HEK293 (cell line): ENCODE measurements at regions of chrX and their contacts with region 1.

Region 1: DNA sequence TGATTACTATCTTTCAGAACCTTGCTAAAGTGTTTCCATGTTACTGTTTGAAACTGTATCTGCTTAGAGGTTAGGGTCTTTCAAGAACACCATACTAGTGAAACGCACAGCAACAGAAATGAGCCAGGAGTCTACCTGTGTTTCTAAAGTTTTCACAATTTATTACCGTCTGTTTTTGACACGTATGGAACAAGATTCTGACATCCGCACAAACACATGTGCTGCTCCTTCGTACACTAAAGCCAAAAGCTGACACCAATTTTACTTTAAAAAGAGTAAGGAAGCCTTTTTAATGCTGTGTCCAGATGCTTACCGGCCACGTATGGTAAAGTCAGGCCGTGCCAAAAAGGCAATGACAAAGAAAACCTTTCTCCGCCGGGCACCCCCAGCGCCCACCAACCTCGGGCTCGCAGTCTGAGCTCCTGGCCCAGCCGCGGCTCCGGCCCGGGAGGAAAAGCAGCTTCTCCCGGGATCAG is 532 bp downstream of the RPS4X start:
- H3K4me3 ChIP-seq: peak overlapping the region; percentile 82
- H3K27ac ChIP-seq: peak overlapping the region; percentile 99
- H3K4me1 ChIP-seq: peaks cover 10% of the 10 kb centered on the region
- CTCF ChIP-seq: no peak

Region 2: GRCh38 chrX:72238721-72239475 is 37.6 kb before region 1 on chrX and contains the start of gene ERCC6L:
- CTCF ChIA-PET with region 1: interaction called, 44 read pairs
- POLR2A ChIA-PET with region 1: interaction called, 43 read pairs
- H3K4me3 ChIP-seq: peak within 1 kb of the TSS; percentile 56
- H3K27ac ChIP-seq: peak within 1 kb of the TSS; percentile 74
- H3K4me1 ChIP-seq: no peaks in the 10 kb centered on the region
- CTCF ChIP-seq: 0 out of 2 replicates have a peak, but pooled peaks have one; percentile 29

Region 3: DNA sequence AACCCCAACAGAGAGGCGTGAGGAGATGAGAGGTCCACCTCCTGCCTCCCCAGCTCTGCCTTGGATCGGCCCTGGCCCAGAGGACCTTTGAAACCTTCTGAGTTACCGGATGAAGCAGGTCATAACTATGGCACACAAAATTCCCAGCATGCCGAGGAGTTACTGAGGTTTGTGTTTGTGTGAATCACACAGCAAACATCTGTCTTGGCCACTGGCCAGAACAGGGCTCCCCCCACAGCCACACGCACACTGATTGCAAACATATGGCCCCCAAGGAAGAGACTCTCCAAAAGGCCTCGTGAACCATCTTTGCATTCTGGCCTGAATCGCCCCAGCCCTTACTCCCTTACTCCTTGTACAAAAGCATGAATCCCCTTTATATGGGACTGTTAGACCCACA is 18.3 kb before region 1 on chrX:
- CTCF ChIA-PET with region 1: interaction called, 7 read pairs
- POLR2A ChIA-PET with region 1: interaction called, 60 read pairs
- H3K4me3 ChIP-seq: no peak overlapping the region
- H3K27ac ChIP-seq: no peak overlapping the region
- H3K4me1 ChIP-seq: peaks cover 12% of the 10 kb centered on the region
- CTCF ChIP-seq: no peak

Region 4: DNA sequence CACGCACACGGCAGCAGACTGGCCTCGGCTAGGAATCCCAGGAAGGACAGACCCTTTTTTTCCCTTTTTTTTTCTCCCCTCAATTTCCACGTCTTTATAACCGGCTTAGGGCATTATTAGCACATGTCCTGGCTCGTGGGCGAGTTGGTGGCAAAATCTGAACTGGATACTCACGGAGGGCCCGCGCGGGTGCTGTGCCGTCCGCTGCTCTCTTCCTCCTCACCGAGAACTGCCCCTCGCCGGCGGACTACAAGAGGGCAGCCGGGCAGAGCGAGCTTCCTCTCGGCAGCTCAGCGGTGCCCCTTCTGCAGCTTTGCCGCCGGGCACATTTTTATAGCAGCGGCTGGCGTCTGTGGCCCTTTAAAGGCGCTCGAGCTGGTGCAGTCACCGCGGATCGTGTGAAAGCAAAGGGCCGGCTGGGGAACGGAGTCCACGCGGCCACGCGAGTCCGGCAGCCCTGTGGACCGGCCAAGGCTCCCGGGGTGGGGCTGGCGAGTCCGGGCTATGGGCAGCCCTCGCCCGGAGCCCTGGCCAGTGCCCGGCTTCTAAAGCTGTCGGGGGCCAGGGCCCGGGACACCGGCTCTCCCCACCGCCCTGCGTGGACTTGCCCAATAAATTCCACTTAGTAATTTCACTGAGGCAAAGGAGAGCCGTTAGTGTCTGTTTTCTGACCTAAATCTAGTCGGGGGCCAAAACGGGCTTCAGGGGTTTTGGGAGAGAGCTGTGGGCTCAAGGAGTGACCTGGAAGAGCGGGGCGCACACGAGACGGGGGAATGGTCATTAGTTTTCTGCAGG is 30.5 kb after region 1 on chrX:
- CTCF ChIA-PET with region 1: interaction called, 9 read pairs
- POLR2A ChIA-PET with region 1: interaction called, 46 read pairs
- H3K4me3 ChIP-seq: peak overlapping the region; percentile 49
- H3K27ac ChIP-seq: peak overlapping the region; percentile 10; the same call in 1 of the 2 replicates
- H3K4me1 ChIP-seq: peaks cover 3% of the 10 kb centered on the region
- CTCF ChIP-seq: no peak; the same call in 1 of the 2 replicates

Region 5: DNA sequence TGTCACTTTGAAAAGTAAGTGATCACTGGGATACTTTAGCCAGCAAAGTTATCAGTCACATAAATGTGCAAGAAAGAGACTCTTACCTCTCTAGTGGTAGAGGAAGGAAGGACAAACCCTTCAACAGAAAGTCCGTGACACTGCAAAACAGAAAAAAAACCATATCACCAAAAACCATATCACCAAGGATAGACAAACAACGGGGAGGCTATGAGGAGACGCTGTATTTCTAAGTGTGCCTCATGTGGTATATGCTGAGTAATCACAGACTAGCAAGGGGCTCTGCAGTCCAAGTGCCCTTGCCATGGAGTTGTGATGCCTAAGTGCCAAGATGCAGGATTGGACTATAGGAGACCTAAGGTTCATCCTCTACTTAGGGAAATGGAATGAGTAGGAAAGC is 307.6 kb after region 1 on chrX:
- CTCF ChIA-PET with region 1: no interaction called
- POLR2A ChIA-PET with region 1: no interaction called
- H3K4me3 ChIP-seq: no peak overlapping the region
- H3K27ac ChIP-seq: no peak overlapping the region
- H3K4me1 ChIP-seq: no peaks in the 10 kb centered on the region
- CTCF ChIP-seq: no peak